ENCODE measurements at regions of chr15 and their contacts with region 1.

Region 1: GRCh38 chr15:31215490-31216214 is 111.0 kb upstream of the KLF13 start:
- DNase-seq: peak; percentile 86
- ATAC-seq: peak; percentile 92
- H3K4me3 Mint-ChIP-seq: peak overlapping the region; percentile 73
- H3K27ac Mint-ChIP-seq: peak overlapping the region; percentile 73
- H3K4me1 Mint-ChIP-seq: peaks cover 18% of the 10 kb centered on the region
- H3K27me3 Mint-ChIP-seq: no peaks in the 10 kb centered on the region
- CTCF ChIP-seq: peak; percentile 86

Region 2: GRCh38 chr15:31179693-31180092 is 36.0 kb before region 1 on chr15:
- CTCF ChIA-PET with region 1: no interaction called
- POLR2A ChIA-PET with region 1: no interaction called
- intact Hi-C with region 1: no loop called
- DNase-seq: no peak
- ATAC-seq: no peak
- H3K4me3 Mint-ChIP-seq: no peak overlapping the region
- H3K27ac Mint-ChIP-seq: no peak overlapping the region
- H3K4me1 Mint-ChIP-seq: peaks cover 14% of the 10 kb centered on the region
- H3K27me3 Mint-ChIP-seq: no peaks in the 10 kb centered on the region
- CTCF ChIP-seq: no peak

Region 3: GRCh38 chr15:31200735-31201151 is 14.9 kb before region 1 on chr15:
- CTCF ChIA-PET with region 1: interaction called, 12 read pairs
- POLR2A ChIA-PET with region 1: interaction called, 5 read pairs
- intact Hi-C with region 1: no loop called
- DNase-seq: peak; percentile 80
- ATAC-seq: peak; percentile 73
- H3K4me3 Mint-ChIP-seq: no peak overlapping the region
- H3K27ac Mint-ChIP-seq: no peak overlapping the region
- H3K4me1 Mint-ChIP-seq: peaks cover 22% of the 10 kb centered on the region
- H3K27me3 Mint-ChIP-seq: no peaks in the 10 kb centered on the region
- CTCF ChIP-seq: no peak

Region 4: DNA sequence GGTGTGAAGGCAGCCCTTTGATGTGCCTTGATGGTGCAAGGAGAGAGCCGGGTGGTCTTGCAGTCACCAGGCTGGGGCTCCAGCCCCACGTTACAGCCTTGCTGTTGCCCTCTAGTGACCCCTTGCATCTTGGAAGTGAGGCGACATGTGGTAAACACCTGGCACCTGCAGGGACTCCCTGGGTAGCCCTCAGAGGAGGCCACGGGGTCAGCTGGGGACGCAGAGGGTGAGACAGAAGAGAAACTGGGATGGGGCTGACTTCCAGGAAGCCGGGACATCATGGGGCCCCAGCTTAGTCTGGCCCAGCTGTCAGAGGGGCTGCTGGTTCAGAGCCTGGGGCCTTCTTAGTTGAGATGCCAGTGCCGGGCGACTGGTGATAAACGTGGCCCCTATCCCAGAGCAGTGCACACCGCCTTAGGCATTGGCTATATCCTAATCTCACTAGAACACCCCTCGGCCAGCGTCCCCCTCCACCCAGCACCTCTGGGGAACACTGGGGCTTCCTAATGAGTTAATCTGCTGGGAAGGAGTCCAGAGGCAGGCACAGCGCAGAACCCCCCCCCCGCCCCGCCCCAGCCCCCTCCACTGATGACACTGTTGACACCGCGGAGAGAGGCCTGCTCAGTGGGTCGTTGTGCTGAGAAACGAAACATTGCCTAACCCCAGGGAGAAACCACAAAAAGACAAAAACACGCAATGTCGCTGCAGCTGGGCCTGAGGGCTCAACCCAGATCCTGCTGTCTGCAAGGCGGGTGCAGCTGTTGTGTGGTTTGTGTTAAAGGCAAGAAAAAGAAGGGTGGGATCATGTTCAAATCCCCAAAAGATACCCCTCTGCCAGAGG is 50.4 kb after region 1 on chr15:
- CTCF ChIA-PET with region 1: interaction called, 14 read pairs
- POLR2A ChIA-PET with region 1: interaction called, 4 read pairs
- intact Hi-C with region 1: no loop called
- DNase-seq: peak; percentile 81
- ATAC-seq: peak; percentile 66
- H3K4me3 Mint-ChIP-seq: no peak overlapping the region
- H3K27ac Mint-ChIP-seq: peak overlapping the region; percentile 69
- H3K4me1 Mint-ChIP-seq: peaks cover 58% of the 10 kb centered on the region
- H3K27me3 Mint-ChIP-seq: peaks cover 3% of the 10 kb centered on the region
- CTCF ChIP-seq: no peak

Measured in activated CD8-positive, alpha-beta T cell treated with anti-CD3 and anti-CD28 coated beads for 36 hours (primary cell).